ENCODE measurements at regions of chr11 and their contacts with region 1.

Region 1: GRCh38 chr11:7442588-7443215 is 42.6 kb upstream of the OLFML1 start:
- DNase-seq: peak; percentile 55 to 61 (median 59)
- H3K4me3 ChIP-seq: no peak overlapping the region
- H3K4me3 Mint-ChIP-seq: no peak overlapping the region
- H3K27ac ChIP-seq: no peak overlapping the region
- H3K27ac Mint-ChIP-seq: no peak overlapping the region
- H3K4me1 ChIP-seq: no peaks in the 10 kb centered on the region
- H3K4me1 Mint-ChIP-seq: peaks cover 0 to 2% (median 0%) of the 10 kb centered on the region in 4 donors
- H3K27me3 ChIP-seq: no peaks in the 10 kb centered on the region
- H3K27me3 Mint-ChIP-seq: peaks cover 2 to 5% of the 10 kb centered on the region in 2 donors

Region 2: DNA sequence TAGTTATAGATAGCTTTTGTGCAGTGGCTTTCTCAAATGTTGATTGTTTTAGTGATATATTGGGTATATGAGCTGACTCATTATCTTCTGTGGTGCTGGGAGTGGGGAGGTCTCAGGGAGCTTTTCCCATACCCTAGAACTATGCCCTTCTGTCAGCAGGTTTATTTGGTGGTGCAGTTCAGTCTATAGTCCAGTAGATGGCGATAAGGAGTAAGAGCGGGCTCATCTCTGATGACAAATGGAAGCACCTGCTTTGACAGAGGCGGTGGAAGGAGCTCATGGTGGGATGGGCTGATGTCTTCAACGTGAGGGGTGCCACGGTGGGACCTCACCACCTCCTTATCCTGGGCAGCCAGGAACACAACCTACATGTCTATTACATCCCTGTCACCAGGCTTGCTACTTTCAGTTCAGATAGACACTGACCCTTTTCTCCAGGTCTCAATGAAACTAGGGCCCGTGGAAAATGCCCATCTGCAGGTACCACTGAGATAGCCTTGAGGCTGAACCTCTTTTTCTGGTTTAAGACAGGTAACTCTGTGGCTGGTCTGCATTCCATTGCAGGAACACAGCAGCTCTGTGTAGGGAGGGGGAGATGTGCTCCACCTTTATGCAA is 630.2 kb before region 1 on chr11:
- CTCF ChIA-PET with region 1: interaction called, 24 read pairs
- POLR2A ChIA-PET with region 1: no interaction called
- intact Hi-C with region 1: loop called (anchors 1 kb)
- DNase-seq: peak; percentile 39 to 51 (median 45)
- H3K4me3 ChIP-seq: no peak overlapping the region
- H3K4me3 Mint-ChIP-seq: peak overlapping the region in 1 of 8 donors; percentile 36
- H3K27ac ChIP-seq: no peak overlapping the region
- H3K27ac Mint-ChIP-seq: no peak overlapping the region
- H3K4me1 ChIP-seq: no peaks in the 10 kb centered on the region
- H3K4me1 Mint-ChIP-seq: peaks cover 0 to 2% (median 0%) of the 10 kb centered on the region in 4 donors
- H3K27me3 ChIP-seq: no peaks in the 10 kb centered on the region
- H3K27me3 Mint-ChIP-seq: peaks cover 27 to 35% of the 10 kb centered on the region in 2 donors

Region 3: GRCh38 chr11:7165911-7166310 is 276.8 kb before region 1 on chr11:
- CTCF ChIA-PET with region 1: no interaction called
- POLR2A ChIA-PET with region 1: no interaction called
- intact Hi-C with region 1: no loop called
- DNase-seq: no peak
- H3K4me3 ChIP-seq: no peak overlapping the region
- H3K4me3 Mint-ChIP-seq: no peak overlapping the region
- H3K27ac ChIP-seq: no peak overlapping the region
- H3K27ac Mint-ChIP-seq: no peak overlapping the region
- H3K4me1 ChIP-seq: no peaks in the 10 kb centered on the region
- H3K4me1 Mint-ChIP-seq: no peaks in the 10 kb centered on the region
- H3K27me3 ChIP-seq: no peaks in the 10 kb centered on the region
- H3K27me3 Mint-ChIP-seq: peaks cover 0 to 3% of the 10 kb centered on the region in 2 donors

Region 4: DNA sequence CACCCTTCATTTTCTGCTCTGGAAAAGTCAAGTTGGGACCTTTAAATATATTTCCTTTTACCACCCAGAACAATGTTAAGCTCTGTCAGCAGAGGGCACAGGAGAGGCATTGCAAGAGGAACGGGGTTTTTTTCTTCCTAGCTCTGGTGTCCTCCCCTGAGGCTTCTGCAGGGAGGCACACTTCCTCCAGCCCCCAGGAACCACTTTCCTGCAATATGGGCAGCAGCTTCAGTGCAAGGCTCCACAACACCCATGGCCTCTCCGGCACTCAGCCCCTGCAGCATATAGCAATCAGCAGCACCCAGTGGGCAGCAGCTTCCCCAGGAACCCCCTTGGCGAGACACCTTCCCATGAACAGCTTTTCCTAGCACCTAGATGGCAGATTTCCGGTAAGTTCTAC is 89.6 kb before region 1 on chr11:
- CTCF ChIA-PET with region 1: interaction called, 35 read pairs
- POLR2A ChIA-PET with region 1: no interaction called
- intact Hi-C with region 1: no loop called
- DNase-seq: peak in 4 of 5 donors; percentile 9 to 15 (median 14)
- H3K4me3 ChIP-seq: no peak overlapping the region
- H3K4me3 Mint-ChIP-seq: no peak overlapping the region
- H3K27ac ChIP-seq: no peak overlapping the region
- H3K27ac Mint-ChIP-seq: no peak overlapping the region
- H3K4me1 ChIP-seq: no peaks in the 10 kb centered on the region
- H3K4me1 Mint-ChIP-seq: no peaks in the 10 kb centered on the region
- H3K27me3 ChIP-seq: no peaks in the 10 kb centered on the region
- H3K27me3 Mint-ChIP-seq: peaks cover 2 to 12% of the 10 kb centered on the region in 2 donors

Region 5: DNA sequence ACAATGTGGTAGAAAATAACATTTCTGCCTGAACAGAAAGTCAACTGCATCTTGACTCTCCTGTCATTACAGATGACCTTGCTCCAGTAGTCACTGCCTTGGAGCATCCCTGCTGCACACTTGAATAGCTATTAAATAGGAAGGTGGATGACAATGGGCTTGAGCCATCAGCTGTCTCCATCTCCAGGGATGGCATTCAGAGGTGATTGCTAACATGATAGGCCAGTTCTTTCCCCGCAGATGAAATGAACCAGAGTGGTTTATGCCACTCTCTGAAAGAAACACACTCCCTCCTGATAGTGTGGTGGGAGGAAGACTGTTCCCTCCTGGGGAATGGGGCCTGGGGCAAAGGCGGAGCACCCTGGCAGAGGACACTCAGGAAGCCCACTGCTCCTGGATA is 14.5 kb before region 1 on chr11:
- CTCF ChIA-PET with region 1: interaction called, 13 read pairs
- POLR2A ChIA-PET with region 1: interaction called, 3 read pairs
- intact Hi-C with region 1: no loop called
- DNase-seq: no peak
- H3K4me3 ChIP-seq: no peak overlapping the region
- H3K4me3 Mint-ChIP-seq: no peak overlapping the region
- H3K27ac ChIP-seq: no peak overlapping the region
- H3K27ac Mint-ChIP-seq: no peak overlapping the region
- H3K4me1 ChIP-seq: peaks cover 3% of the 10 kb centered on the region
- H3K4me1 Mint-ChIP-seq: peaks cover 4 to 9% (median 5%) of the 10 kb centered on the region in 4 donors
- H3K27me3 ChIP-seq: no peaks in the 10 kb centered on the region
- H3K27me3 Mint-ChIP-seq: peaks cover 0 to 2% of the 10 kb centered on the region in 2 donors

Region 6: GRCh38 chr11:7621090-7621489 is 178.4 kb after region 1 on chr11:
- CTCF ChIA-PET with region 1: no interaction called
- POLR2A ChIA-PET with region 1: no interaction called
- intact Hi-C with region 1: no loop called
- DNase-seq: no peak
- H3K4me3 ChIP-seq: no peak overlapping the region
- H3K4me3 Mint-ChIP-seq: no peak overlapping the region
- H3K27ac ChIP-seq: no peak overlapping the region
- H3K27ac Mint-ChIP-seq: no peak overlapping the region
- H3K4me1 ChIP-seq: no peaks in the 10 kb centered on the region
- H3K4me1 Mint-ChIP-seq: no peaks in the 10 kb centered on the region
- H3K27me3 ChIP-seq: no peaks in the 10 kb centered on the region
- H3K27me3 Mint-ChIP-seq: no peaks in the 10 kb centered on the region

Region 7: GRCh38 chr11:7694235-7694634 is 251.5 kb after region 1 on chr11:
- CTCF ChIA-PET with region 1: interaction called, 5 read pairs
- POLR2A ChIA-PET with region 1: no interaction called
- intact Hi-C with region 1: loop called (anchors 1 kb)
- DNase-seq: no peak
- H3K4me3 ChIP-seq: no peak overlapping the region
- H3K4me3 Mint-ChIP-seq: no peak overlapping the region
- H3K27ac ChIP-seq: no peak overlapping the region
- H3K27ac Mint-ChIP-seq: no peak overlapping the region
- H3K4me1 ChIP-seq: peaks cover 6% of the 10 kb centered on the region
- H3K4me1 Mint-ChIP-seq: no peaks in the 10 kb centered on the region
- H3K27me3 ChIP-seq: no peaks in the 10 kb centered on the region
- H3K27me3 Mint-ChIP-seq: peaks cover 21% of the 10 kb centered on the region in 2 donors

Measured in CD4-positive, alpha-beta memory T cell (primary cell).